Activated CD8-positive, alpha-beta T cell treated with anti-CD3 and anti-CD28 coated beads for 36 hours (primary cell): ENCODE measurements at regions of chr1 and their contacts with region 1.

Region 1: GRCh38 chr1:197356723-197357533 is 88.9 kb downstream of the CRB1 start:
- DNase-seq: peak; percentile 26
- ATAC-seq: peak; percentile 71
- H3K4me3 Mint-ChIP-seq: no peak overlapping the region
- H3K27ac Mint-ChIP-seq: no peak overlapping the region
- H3K4me1 Mint-ChIP-seq: no peaks in the 10 kb centered on the region
- H3K27me3 Mint-ChIP-seq: no peaks in the 10 kb centered on the region
- CTCF ChIP-seq: peak; percentile 76

Region 2: DNA sequence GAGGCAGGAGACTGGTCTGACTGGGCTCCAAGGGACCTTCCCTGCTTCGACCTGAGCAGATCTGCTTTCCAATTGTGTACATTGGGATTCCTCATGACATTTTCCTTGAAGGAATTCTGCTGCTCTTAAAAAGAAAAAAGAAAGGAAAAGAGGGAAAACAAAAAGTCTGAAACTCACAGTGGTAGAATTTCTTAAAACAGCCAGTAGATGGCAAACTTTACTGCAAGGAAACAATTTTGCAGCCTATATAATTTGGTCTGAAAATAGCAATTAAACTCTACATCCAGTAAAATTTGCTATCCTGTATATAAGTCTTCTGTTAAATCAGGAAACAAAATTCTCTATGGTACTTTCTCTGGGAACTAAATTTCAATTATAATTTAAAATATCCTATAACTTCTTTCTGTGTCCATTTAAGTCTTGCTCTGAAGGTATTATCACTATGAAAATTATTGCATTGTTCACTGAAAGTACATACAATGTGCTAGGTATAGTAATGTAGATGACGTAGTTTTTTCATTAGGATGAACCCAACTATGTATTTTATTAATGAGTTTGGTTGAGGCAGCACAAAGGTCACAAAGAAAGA is 29.1 kb before region 1 on chr1:
- CTCF ChIA-PET with region 1: interaction called, 23 read pairs
- POLR2A ChIA-PET with region 1: no interaction called
- intact Hi-C with region 1: no loop called
- DNase-seq: no peak
- ATAC-seq: no peak
- H3K4me3 Mint-ChIP-seq: no peak overlapping the region
- H3K27ac Mint-ChIP-seq: no peak overlapping the region
- H3K4me1 Mint-ChIP-seq: no peaks in the 10 kb centered on the region
- H3K27me3 Mint-ChIP-seq: no peaks in the 10 kb centered on the region
- CTCF ChIP-seq: peak; percentile 68

Region 3: DNA sequence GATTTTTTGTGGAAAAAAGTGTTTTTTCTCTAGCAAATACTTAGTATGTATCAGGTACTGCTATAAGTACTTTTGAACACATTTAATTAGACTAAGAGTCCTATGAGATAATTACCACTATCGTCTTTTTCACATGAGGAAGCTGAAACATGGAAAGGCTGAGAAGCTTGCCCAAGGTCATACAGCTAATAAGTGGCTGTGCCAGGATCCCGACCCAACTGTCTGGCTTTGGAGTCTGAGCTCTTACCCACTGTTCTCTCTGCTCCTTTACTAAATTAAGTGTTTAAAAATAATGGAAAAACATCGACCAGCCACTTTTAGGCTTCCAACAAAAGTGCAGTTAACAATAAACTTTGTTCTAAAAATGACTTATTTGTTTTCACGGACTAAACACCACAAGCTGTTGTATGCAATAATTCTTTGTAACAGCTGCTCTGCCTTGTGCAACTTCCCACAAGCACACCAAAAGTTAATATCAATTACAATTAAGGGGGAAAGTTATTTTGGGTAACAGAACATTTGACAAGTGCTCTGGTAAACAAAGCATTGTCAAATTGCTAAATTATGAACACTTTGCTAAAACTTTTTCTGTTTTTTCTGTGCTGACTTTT is 13.2 kb before region 1 on chr1:
- CTCF ChIA-PET with region 1: interaction called, 10 read pairs
- POLR2A ChIA-PET with region 1: no interaction called
- intact Hi-C with region 1: no loop called
- DNase-seq: no peak
- ATAC-seq: no peak
- H3K4me3 Mint-ChIP-seq: no peak overlapping the region
- H3K27ac Mint-ChIP-seq: no peak overlapping the region
- H3K4me1 Mint-ChIP-seq: peaks cover 7% of the 10 kb centered on the region
- H3K27me3 Mint-ChIP-seq: peaks cover 3% of the 10 kb centered on the region
- CTCF ChIP-seq: no peak